ENCODE measurements at regions of chr3 and their contacts with region 1.

Region 1: DNA sequence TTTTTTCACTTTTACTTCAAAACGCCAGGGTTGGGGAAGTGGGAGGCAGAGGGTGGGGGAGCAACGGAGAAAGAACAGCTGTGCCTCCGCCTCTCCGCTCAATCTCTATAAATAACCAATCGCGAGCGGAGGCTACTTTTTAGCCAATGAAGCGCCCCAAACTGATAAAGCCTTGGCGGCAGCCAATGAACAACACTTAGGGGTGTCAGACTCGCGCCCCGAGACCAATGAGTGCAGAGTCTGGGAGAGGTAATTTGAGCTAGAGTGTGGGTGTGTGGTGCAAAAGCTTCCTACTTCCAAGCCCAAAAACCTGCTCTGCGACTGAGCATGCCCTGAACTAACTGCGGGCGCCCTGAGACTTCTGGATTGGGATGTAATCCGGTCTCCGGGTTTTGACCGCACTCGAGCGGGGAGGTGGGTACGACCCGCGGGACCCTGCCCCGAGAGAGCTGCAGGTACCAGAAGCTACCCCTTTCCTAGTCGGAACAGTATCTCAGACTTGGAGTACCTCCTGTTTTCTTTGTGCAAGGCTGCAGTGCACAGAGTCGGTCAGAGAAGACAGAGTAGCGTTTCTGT is 800 bp upstream of the RAP2B start:
- DNase-seq: peak; percentile 90 to 96 (median 94)
- H3K4me3 ChIP-seq: peak overlapping the region; percentile 75 to 93
- H3K4me3 Mint-ChIP-seq: peak overlapping the region; percentile 97 to 100 (median 99)
- H3K27ac ChIP-seq: peak overlapping the region; percentile 76
- H3K27ac Mint-ChIP-seq: peak overlapping the region; percentile 96 to 98 (median 98)
- H3K4me1 ChIP-seq: peaks cover 31% of the 10 kb centered on the region
- H3K4me1 Mint-ChIP-seq: peaks cover 19 to 57% (median 33%) of the 10 kb centered on the region in 4 donors
- H3K27me3 ChIP-seq: no peaks in the 10 kb centered on the region
- H3K27me3 Mint-ChIP-seq: no peaks in the 10 kb centered on the region

Region 2: GRCh38 chr3:153032891-153033290 is 128.3 kb before region 1 on chr3:
- CTCF ChIA-PET with region 1: no interaction called
- POLR2A ChIA-PET with region 1: no interaction called
- intact Hi-C with region 1: no loop called
- DNase-seq: no peak
- H3K4me3 ChIP-seq: no peak overlapping the region
- H3K4me3 Mint-ChIP-seq: no peak overlapping the region
- H3K27ac ChIP-seq: no peak overlapping the region
- H3K27ac Mint-ChIP-seq: no peak overlapping the region
- H3K4me1 ChIP-seq: no peaks in the 10 kb centered on the region
- H3K4me1 Mint-ChIP-seq: no peaks in the 10 kb centered on the region
- H3K27me3 ChIP-seq: no peaks in the 10 kb centered on the region
- H3K27me3 Mint-ChIP-seq: no peaks in the 10 kb centered on the region

Region 3: GRCh38 chr3:153043729-153044328 is 117.4 kb before region 1 on chr3:
- CTCF ChIA-PET with region 1: interaction called, 24 read pairs
- POLR2A ChIA-PET with region 1: interaction called, 9 read pairs
- intact Hi-C with region 1: loop called (anchors 1 kb)
- DNase-seq: no peak
- H3K4me3 ChIP-seq: no peak overlapping the region
- H3K4me3 Mint-ChIP-seq: no peak overlapping the region
- H3K27ac ChIP-seq: no peak overlapping the region
- H3K27ac Mint-ChIP-seq: no peak overlapping the region
- H3K4me1 ChIP-seq: no peaks in the 10 kb centered on the region
- H3K4me1 Mint-ChIP-seq: peaks cover 0 to 5% (median 4%) of the 10 kb centered on the region in 4 donors
- H3K27me3 ChIP-seq: no peaks in the 10 kb centered on the region
- H3K27me3 Mint-ChIP-seq: peaks cover 0 to 1% of the 10 kb centered on the region in 2 donors

Region 4: GRCh38 chr3:153209596-153209995 is 48.4 kb after region 1 on chr3:
- CTCF ChIA-PET with region 1: interaction called, 45 read pairs
- POLR2A ChIA-PET with region 1: interaction called, 24 read pairs
- intact Hi-C with region 1: loop called (anchors 1 kb)
- DNase-seq: no peak
- H3K4me3 ChIP-seq: no peak overlapping the region
- H3K4me3 Mint-ChIP-seq: peak overlapping the region in 6 of 8 donors; percentile 59 to 80 (median 72)
- H3K27ac ChIP-seq: no peak overlapping the region
- H3K27ac Mint-ChIP-seq: peak overlapping the region in 5 of 7 donors; percentile 54 to 85 (median 72)
- H3K4me1 ChIP-seq: peaks cover 20% of the 10 kb centered on the region
- H3K4me1 Mint-ChIP-seq: peaks cover 26 to 42% (median 33%) of the 10 kb centered on the region in 4 donors
- H3K27me3 ChIP-seq: no peaks in the 10 kb centered on the region
- H3K27me3 Mint-ChIP-seq: no peaks in the 10 kb centered on the region

Region 5: DNA sequence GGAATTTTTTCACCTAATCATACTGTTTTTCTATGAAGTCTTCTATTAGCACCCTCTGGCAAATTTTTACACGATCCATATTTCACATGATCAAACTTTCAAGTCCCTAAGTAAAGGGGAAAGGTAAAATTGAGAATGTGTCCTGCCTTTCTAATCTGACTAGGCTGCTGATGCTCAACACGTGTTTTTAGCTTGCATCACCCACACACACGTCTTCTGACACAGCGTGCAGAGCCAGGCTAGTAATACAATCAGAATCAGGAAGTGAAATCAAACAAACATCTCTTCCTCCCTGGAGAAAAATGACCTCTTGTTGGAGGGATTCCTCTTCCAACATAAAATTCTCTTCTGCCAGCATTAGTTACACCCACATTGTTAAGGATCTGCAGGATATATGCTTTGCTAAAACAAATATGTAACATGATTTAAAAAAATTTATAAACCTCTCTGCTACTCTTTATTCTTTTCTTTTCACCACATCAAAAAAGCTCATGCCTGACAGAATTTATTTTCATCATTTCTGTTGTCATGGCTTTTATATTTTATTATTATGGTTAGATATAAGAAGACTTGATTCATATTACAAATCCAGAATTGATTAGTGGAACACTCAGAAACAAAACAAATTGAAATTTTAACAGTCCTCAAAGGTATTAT is 123.2 kb after region 1 on chr3:
- CTCF ChIA-PET with region 1: interaction called, 191 read pairs
- POLR2A ChIA-PET with region 1: interaction called, 96 read pairs
- intact Hi-C with region 1: no loop called
- DNase-seq: peak; percentile 42 to 59 (median 50)
- H3K4me3 ChIP-seq: no peak overlapping the region
- H3K4me3 Mint-ChIP-seq: peak overlapping the region in 7 of 8 donors; percentile 57 to 81 (median 65)
- H3K27ac ChIP-seq: peak overlapping the region; percentile 20
- H3K27ac Mint-ChIP-seq: peak overlapping the region; percentile 74 to 97 (median 91)
- H3K4me1 ChIP-seq: peaks cover 51% of the 10 kb centered on the region
- H3K4me1 Mint-ChIP-seq: peaks cover 34 to 49% (median 43%) of the 10 kb centered on the region in 4 donors
- H3K27me3 ChIP-seq: no peaks in the 10 kb centered on the region
- H3K27me3 Mint-ChIP-seq: no peaks in the 10 kb centered on the region

Region 6: GRCh38 chr3:153513236-153513635 is 352.0 kb after region 1 on chr3:
- CTCF ChIA-PET with region 1: interaction called, 3 read pairs
- POLR2A ChIA-PET with region 1: no interaction called
- intact Hi-C with region 1: loop called (anchors 5 kb)
- DNase-seq: peak in 4 of 5 donors; percentile 12 to 20 (median 12)
- H3K4me3 ChIP-seq: no peak overlapping the region
- H3K4me3 Mint-ChIP-seq: no peak overlapping the region
- H3K27ac ChIP-seq: no peak overlapping the region
- H3K27ac Mint-ChIP-seq: no peak overlapping the region
- H3K4me1 ChIP-seq: no peaks in the 10 kb centered on the region
- H3K4me1 Mint-ChIP-seq: peaks cover 0 to 4% (median 1%) of the 10 kb centered on the region in 4 donors
- H3K27me3 ChIP-seq: no peaks in the 10 kb centered on the region
- H3K27me3 Mint-ChIP-seq: peaks cover 0 to 2% of the 10 kb centered on the region in 2 donors

Region 7: DNA sequence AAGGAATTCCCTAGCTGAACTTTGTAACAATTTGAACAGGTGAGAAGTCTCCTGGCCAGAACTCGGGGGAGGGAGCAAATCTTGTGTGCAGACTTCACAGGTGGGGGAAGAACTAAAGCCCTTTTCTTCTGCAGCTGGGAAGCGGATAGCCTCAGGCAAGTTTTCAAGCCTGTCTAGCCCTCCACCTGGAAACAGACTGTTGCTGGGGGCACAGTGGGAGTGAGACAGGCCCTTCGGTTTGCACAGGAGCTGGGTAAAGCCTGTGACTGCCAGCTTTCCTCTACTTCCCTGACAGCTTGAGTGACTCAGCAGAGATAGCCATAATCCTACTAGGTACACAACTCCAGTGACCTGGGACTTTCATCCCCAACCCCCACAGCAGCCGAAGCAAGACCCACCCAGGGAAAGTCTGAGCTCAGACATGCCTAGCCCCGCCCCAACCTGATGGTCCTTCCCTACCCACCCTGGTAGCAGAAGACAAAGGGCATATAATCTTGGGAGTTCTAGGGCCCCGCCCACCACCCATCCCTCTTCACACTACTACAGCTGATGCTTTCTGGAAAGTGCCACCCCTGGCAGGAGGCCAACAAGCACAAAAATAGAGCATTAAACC is 479.6 kb after region 1 on chr3:
- CTCF ChIA-PET with region 1: interaction called, 4 read pairs
- POLR2A ChIA-PET with region 1: interaction called, 20 read pairs
- intact Hi-C with region 1: loop called (anchors 5 kb)
- DNase-seq: peak in 1 of 5 donors; percentile 36
- H3K4me3 ChIP-seq: no peak overlapping the region
- H3K4me3 Mint-ChIP-seq: no peak overlapping the region
- H3K27ac ChIP-seq: no peak overlapping the region
- H3K27ac Mint-ChIP-seq: peak overlapping the region in 3 of 7 donors; percentile 12 to 63 (median 18)
- H3K4me1 ChIP-seq: peaks cover 41% of the 10 kb centered on the region
- H3K4me1 Mint-ChIP-seq: peaks cover 39 to 56% (median 40%) of the 10 kb centered on the region in 4 donors
- H3K27me3 ChIP-seq: no peaks in the 10 kb centered on the region
- H3K27me3 Mint-ChIP-seq: no peaks in the 10 kb centered on the region

Measured in CD4-positive, alpha-beta memory T cell (primary cell).